ENCODE measurements at regions of chr1 and their contacts with region 1.

Region 1: DNA sequence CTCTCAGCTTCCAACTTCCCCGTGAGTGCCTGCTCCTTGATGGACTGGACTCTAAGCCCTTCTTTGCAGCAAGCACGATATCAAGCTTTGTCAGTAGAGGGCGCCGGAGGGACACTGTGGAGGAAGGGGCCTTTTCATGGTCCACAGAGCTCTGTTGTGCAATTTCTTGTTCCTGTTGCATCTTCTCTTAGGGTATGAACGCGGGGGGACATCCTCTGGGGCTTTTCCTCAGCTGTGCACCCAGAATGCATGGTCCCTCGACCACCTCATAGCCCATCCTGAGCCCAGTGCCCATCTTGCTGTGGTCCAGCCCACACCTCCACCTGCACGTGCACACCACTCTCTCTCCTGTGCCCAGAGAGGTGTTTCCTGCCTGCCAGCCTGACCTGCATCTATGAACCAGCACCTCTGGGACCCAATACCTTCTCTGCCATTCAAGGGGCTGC is 556.8 kb downstream of the PTPRU start:
- DNase-seq: peak; percentile 54 to 94 (median 87)

Region 2: DNA sequence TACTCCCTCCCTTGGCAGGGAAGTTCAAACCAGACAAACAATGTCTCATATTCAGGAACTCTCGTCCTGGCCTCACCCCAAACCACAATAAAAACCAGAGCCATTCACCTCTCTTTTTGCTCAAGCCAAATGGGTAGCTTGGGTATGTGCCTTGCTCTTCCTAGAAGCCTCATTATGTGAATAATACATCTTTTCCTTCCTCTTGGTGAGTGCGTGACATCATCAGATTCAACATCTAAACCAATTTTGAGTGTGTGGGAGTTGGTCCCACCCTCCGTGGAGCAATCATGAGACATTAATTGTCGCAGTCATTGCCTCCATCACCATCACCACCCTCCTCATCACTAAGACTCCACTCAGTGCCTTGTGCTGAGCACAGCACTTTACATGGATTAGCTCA is 73.9 kb before region 1 on chr1:
- intact Hi-C with region 1: no loop called
- DNase-seq: no peak

Region 3: DNA sequence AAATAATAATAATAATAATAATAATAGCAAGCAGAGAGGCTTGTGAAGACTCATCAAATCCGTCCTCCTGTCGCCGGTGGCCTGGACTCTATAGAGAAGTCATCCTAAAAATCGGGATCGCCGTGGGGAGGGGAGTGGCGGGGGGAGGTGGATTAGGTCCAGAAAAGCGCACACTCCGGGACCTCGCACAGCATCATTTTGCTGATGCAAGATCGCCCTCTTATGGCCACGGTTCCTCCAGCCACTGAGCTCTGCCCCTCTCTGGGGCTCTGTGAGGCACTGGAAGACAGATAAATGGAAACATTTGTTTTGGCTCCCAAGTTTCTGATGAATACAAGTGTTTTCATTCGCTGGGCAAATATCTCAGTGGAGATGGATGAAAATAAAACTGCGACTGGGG is 318.3 kb after region 1 on chr1:
- intact Hi-C with region 1: loop called (anchors 2 kb)
- DNase-seq: peak; percentile 34 to 95 (median 62)

Region 4: DNA sequence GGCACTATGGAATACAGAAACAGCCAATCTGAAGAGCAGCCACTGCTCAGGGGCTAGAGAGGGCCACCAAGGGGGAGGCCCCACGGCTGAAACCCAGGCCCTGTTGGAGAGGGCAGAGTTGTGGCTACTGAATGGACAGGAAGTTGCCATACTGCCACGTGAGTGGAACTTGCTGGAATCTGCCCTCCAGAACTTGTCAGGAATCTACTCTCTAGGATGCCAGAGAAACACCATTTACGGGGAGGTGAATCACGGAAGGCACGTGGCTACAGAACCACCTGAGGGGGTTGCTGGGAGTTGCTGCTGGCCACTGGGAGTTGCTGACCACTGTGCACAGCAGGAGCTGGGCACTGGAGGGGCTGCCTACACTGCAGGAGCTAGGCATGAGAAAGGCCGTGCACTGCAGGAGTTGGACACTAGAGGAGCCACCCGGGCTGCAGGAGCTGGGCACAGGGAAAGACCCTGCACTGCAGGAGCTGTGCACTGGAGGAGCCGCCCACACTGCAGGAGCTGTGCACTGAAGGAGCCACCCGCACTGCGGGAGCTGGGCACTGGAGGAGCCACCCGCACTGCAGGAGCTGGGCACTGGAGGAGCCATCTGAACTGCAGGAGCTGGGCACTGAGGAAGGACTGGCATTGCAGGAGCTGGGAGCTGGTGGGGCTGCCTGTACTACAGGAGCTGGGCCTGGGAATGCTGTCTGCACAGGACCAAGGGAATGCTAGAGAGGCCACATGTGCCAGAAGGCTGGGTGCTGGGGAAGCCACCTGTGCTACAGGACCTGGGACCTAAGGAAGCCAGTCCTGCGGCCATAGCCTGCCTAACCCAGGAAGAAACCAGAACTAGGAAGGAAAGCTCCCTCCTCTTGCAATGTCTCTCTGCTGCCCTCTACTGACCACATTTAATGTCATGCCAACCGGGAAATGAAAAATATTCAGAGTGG is 586.8 kb after region 1 on chr1:
- intact Hi-C with region 1: loop called (anchors 5 kb)
- DNase-seq: peak in 7 of 10 donors; percentile 27 to 91 (median 54)

Measured in posterior cingulate gyrus (tissue), 11 donors.